B cell (primary cell): ENCODE measurements at regions of chr11 and their contacts with region 1.

Region 1: GRCh38 chr11:77602381-77603088 is 12.8 kb downstream of the AQP11 start:
- DNase-seq: no peak
- ATAC-seq: no peak
- H3K4me3 ChIP-seq: no peak overlapping the region
- H3K4me3 Mint-ChIP-seq: no peak overlapping the region
- H3K27ac ChIP-seq: no peak overlapping the region
- H3K27ac Mint-ChIP-seq: no peak overlapping the region
- H3K4me1 ChIP-seq: no peaks in the 10 kb centered on the region
- H3K4me1 Mint-ChIP-seq: no peaks in the 10 kb centered on the region
- H3K27me3 ChIP-seq: no peaks in the 10 kb centered on the region
- H3K27me3 Mint-ChIP-seq: no peaks in the 10 kb centered on the region
- CTCF ChIP-seq: no peak

Region 2: DNA sequence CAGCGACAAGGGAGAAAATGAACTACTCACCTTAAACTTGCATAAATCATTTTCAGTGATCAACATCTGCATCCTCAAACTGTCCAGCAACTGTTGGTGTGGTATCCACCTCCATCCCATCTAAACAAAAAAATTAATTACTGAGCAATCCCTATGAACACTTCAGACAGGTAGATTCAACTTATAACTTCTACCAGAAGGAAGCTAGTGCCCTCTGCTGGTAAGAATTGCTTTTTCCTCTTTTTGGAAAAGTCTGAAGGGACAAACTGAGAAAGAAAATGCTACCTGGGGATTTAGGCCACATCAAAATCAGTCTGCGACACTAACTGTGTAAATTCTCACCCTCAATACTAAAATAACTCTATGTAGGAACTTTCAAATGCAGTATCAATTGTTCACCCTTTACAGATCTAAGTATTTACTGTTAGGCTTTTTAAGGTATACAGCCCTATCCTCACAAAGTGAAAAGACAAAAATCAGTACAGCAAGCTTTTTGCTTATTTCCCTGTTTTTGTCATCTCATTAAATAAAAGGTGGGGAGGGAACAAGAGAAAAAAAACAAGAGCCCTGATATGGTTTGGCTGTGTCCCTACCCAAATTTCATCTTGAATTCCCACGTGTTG is 17.2 kb after region 1 on chr11:
- CTCF ChIA-PET with region 1: interaction called, 10 read pairs
- POLR2A ChIA-PET with region 1: no interaction called
- intact Hi-C with region 1: no loop called
- DNase-seq: peak; percentile 65
- ATAC-seq: no peak
- H3K4me3 ChIP-seq: no peak overlapping the region
- H3K4me3 Mint-ChIP-seq: no peak overlapping the region
- H3K27ac ChIP-seq: no peak overlapping the region
- H3K27ac Mint-ChIP-seq: no peak overlapping the region
- H3K4me1 ChIP-seq: no peaks in the 10 kb centered on the region
- H3K4me1 Mint-ChIP-seq: no peaks in the 10 kb centered on the region
- H3K27me3 ChIP-seq: no peaks in the 10 kb centered on the region
- H3K27me3 Mint-ChIP-seq: no peaks in the 10 kb centered on the region
- CTCF ChIP-seq: peak; percentile 86